HEK293T (cell line): ENCODE measurements at regions of chr15 and their contacts with region 1.

Region 1: DNA sequence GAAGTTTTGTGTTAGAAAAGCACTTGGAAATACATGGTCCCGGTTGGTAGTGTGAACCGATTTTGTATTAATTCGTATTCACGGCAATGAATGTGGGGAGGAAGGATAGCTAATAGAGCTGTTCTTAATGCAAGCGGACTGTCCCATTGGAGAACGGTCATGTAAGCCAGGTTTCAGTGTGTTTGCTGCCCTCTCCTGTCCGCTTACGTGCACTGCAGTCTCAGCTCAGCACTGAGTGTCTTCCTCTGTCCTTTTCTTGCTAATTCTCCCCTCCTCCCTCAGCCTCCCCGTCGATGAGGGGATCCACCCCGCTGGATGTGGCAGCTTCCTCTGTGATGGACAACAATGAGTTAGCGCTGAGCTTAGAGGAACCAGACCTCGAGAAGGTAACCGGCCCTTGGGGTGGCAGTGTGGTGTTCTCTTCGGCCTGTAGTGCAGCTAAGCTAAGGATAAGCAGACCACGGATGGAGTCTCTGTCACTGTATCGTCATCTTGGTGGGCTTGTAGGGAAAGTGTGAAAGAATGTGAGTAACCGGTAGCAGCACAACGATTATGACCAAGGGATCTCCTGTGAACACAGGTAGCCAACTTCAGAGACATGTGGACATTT is 267.5 kb upstream of the CHRM5 start:
- DNase-seq: peak; percentile 59

Region 2: DNA sequence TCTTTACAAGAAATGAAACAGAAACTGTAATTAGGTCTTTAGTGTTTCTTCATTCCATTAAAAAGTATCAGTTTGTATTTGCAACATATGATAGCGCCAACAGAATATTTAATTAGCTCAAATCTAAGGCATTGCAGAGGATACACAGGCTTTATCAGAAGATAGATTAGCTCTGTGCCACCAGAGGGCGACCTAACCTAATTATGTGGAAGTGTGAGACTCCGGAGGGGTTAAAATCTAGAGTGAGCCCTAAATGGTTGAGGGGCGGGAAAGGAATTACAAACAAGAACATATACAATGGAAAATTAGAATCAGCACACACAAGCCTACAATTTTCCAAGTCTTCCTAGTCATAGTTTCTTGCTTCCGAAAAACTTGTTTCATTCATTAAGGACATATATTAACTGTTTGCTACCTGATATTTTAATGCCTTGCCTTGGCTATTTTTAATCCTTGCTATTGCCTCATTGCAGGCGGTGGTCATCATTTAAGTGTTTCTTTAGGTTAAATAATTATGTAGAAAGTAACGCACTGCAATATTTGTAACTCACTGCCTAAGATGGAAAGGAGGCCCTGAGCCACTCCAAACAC is 408.0 kb before region 1 on chr15:
- CTCF ChIA-PET with region 1: interaction called, 20 read pairs
- POLR2A ChIA-PET with region 1: no interaction called
- DNase-seq: peak; percentile 24

Region 3: DNA sequence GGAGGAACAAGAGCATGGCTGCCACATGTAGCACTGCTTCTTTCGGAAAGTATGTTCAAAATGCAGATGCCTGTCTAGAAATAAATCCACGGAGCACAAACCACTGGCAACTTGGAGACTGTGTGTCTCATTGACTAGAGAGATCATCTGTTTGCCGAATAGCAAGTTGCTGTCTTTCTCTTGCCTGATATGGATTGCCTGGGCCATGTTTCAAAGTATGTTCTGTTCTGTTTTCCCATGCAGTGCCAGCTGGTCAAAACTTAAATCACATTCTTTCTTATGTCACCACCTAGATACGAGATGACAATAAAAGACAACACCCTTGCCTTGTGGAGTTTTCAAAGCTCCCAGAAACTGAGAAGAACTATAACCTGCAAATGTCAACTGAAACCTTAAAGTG is 71.2 kb before region 1 on chr15:
- CTCF ChIA-PET with region 1: no interaction called
- POLR2A ChIA-PET with region 1: no interaction called
- DNase-seq: no peak

Region 4: GRCh38 chr15:33716025-33716424 is 15.2 kb after region 1 on chr15:
- CTCF ChIA-PET with region 1: no interaction called
- POLR2A ChIA-PET with region 1: no interaction called
- DNase-seq: no peak